Ovary (tissue), 10 donors: ENCODE measurements at regions of chr14 and their contacts with region 1.

Region 1: DNA sequence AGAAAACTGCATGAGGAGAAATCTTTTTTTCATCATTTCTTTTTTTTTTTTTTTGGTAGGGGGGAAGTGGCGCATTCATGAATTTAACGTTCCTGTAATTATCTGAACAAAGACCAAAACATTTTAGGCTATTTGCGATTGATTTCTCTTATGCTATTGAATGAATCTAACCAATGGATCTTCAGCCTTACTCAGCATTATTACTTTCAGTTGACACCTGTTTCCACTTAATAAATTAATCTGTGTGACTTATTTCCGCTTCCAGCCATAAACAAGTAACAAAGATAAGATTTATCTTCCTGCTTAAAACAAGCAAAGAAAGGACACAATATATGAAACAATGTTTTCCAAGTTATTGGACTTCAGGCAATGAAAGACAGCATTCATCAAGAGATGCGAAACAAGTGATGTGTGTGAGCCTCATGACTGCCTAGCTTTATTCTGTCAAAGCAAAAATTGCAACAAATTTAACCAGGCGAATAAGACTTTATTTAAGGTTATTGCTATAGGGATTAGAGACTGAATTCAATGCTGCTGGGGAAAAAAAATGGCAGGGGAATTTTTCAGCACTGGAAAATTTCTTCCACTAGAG is 1026.9 kb downstream of the LRFN5 start:
- DNase-seq: no peak
- H3K4me3 ChIP-seq: no peak overlapping the region
- H3K27ac ChIP-seq: no peak overlapping the region
- H3K4me1 ChIP-seq: no peaks in the 10 kb centered on the region
- H3K27me3 ChIP-seq: no peaks in the 10 kb centered on the region
- CTCF ChIP-seq: no peak
- EP300 ChIP-seq: no peak
- POLR2A ChIP-seq: no peak

Region 2: DNA sequence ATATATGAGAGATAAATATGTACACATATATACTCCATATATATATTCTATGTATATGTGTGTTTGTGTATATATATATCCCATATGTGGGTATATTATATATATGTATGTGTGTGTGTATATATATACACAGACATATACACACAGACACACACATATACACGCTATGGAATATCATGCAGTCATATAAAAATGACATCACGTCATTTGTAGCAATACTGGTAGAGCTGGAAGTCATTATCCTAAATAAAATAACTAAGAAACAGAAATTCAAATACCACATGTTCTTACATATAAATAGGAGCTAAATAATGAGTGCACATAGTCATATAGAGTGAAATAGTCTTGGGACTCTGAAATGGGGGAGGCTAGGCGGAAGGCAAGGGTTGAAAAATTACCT is 26.8 kb before region 1 on chr14:
- intact Hi-C with region 1: no loop called
- DNase-seq: no peak
- H3K4me3 ChIP-seq: no peak overlapping the region
- H3K27ac ChIP-seq: no peak overlapping the region
- H3K4me1 ChIP-seq: no peaks in the 10 kb centered on the region
- H3K27me3 ChIP-seq: peaks cover 4% of the 10 kb centered on the region
- CTCF ChIP-seq: no peak
- EP300 ChIP-seq: no peak
- POLR2A ChIP-seq: no peak

Region 3: GRCh38 chr14:42665093-42665492 is 31.5 kb after region 1 on chr14:
- intact Hi-C with region 1: loop called in 1 of 4 experiments (anchors 1 kb)
- DNase-seq: no peak
- H3K4me3 ChIP-seq: no peak overlapping the region
- H3K27ac ChIP-seq: no peak overlapping the region
- H3K4me1 ChIP-seq: no peaks in the 10 kb centered on the region
- H3K27me3 ChIP-seq: no peaks in the 10 kb centered on the region
- CTCF ChIP-seq: no peak
- EP300 ChIP-seq: no peak
- POLR2A ChIP-seq: no peak

Region 4: GRCh38 chr14:42710071-42710470 is 76.5 kb after region 1 on chr14:
- intact Hi-C with region 1: no loop called
- DNase-seq: no peak
- H3K4me3 ChIP-seq: no peak overlapping the region
- H3K27ac ChIP-seq: no peak overlapping the region
- H3K4me1 ChIP-seq: no peaks in the 10 kb centered on the region
- H3K27me3 ChIP-seq: no peaks in the 10 kb centered on the region
- CTCF ChIP-seq: no peak
- EP300 ChIP-seq: no peak
- POLR2A ChIP-seq: no peak

Region 5: GRCh38 chr14:43042396-43042795 is 408.8 kb after region 1 on chr14:
- intact Hi-C with region 1: no loop called
- DNase-seq: no peak
- H3K4me3 ChIP-seq: no peak overlapping the region
- H3K27ac ChIP-seq: no peak overlapping the region
- H3K4me1 ChIP-seq: no peaks in the 10 kb centered on the region
- H3K27me3 ChIP-seq: no peaks in the 10 kb centered on the region
- CTCF ChIP-seq: no peak
- EP300 ChIP-seq: no peak
- POLR2A ChIP-seq: no peak